ENCODE measurements at regions of chr2 and their contacts with region 1.

Region 1: DNA sequence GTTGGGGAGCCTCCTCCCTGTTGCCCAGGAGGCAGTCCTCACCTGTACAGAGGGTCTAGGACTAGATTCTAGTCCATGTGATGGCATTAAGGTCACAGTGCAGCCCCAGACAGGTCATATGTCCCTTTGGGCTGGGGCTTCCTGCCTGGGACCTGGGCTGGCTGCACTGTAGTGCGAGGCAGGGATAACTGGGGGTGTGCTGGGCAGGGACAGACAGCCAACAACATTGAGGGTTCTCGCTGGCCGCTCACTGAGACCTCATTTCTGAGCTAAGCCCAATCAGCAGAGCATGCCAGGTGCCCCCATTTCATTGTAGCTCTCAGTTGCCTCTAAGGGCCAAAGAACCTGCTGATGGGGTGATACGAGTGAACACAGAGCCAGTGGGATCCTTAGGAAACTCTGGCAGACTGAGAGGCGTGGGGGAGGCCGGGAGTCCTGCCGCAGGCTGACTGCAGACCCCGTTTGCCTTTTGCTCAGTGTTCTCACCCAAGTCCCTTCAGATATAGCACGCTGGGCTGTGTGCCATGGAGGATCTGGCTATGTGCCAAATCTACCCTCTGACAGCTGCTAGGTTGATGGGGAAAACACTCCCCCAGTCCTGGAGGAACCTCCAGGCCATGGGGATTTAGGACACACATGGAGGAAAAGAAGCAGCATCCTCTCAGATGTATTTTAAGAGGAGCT is 51.9 kb downstream of the DYSF start:
- DNase-seq: no peak
- H3K4me3 ChIP-seq: no peak overlapping the region
- H3K27ac ChIP-seq: no peak overlapping the region
- H3K4me1 ChIP-seq: no peaks in the 10 kb centered on the region
- H3K27me3 ChIP-seq: no peaks in the 10 kb centered on the region
- CTCF ChIP-seq: no peak
- EP300 ChIP-seq: no peak
- POLR2A ChIP-seq: no peak

Region 2: DNA sequence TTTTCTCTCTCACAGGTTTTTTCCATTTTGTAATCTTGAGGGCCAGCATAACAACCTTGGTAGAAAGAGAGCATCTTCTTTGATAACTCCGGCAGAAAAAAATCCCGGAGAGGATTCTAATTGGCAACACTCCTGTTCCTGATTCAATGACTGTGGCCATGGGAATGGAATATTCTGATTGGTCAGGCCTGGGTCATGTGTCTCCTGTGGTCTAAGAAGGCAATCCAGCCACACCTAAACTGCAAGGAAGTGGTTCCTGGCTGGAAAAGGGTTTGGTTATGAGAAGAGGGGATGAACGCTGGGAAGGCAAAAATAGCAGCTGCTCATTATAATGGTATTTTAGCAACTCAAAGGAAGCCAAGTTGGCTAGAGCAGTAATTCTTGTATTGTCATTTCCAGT is 198.5 kb before region 1 on chr2:
- in situ Hi-C with region 1: loop called in 1 of 4 experiments (anchors 10 kb)
- intact Hi-C with region 1: loop called (anchors 1 kb)
- DNase-seq: no peak
- H3K4me3 ChIP-seq: no peak overlapping the region
- H3K27ac ChIP-seq: no peak overlapping the region
- H3K4me1 ChIP-seq: no peaks in the 10 kb centered on the region
- H3K27me3 ChIP-seq: no peaks in the 10 kb centered on the region
- CTCF ChIP-seq: no peak
- EP300 ChIP-seq: no peak
- POLR2A ChIP-seq: no peak

Region 3: DNA sequence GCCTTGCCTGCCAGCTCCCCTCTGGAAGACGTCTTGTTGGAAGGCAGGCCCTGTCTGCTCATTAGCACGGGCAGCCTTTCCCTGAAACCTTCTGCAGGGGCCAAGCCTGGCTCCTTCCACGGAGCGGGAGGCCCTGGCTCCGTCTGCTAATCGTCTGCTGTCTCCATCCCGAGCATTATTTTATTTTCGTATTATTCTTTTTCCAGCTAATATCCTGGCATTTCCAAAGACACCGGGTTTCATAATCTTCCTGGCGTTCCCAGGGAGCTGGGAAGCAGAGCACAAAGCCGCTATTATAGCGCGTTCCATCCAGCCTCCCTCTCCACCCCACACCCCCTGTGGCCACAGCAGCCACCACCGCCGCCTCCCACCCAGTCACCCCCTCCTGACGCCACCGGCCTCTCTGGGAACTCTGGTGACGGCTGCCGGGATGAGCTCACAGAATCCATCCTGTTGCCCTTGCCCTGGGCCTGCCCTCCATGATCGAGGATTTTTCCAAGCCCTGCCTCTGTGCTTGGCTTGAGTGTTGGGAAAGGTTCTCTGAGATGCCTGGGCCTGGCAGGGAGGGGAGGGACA is 73.6 kb after region 1 on chr2:
- in situ Hi-C with region 1: no loop called
- intact Hi-C with region 1: no loop called
- DNase-seq: peak; percentile 14
- H3K4me3 ChIP-seq: no peak overlapping the region
- H3K27ac ChIP-seq: peak overlapping the region in 3 of 4 donors; percentile 10 to 61 (median 57)
- H3K4me1 ChIP-seq: no peaks in the 10 kb centered on the region
- H3K27me3 ChIP-seq: no peaks in the 10 kb centered on the region
- CTCF ChIP-seq: no peak
- EP300 ChIP-seq: no peak
- POLR2A ChIP-seq: no peak